H1 (cell line): ENCODE measurements at regions of chr1 and their contacts with region 1.

Region 1: GRCh38 chr1:212838145-212838544 is 9.3 kb downstream of the SPATA45 start:
- DNase-seq: no peak
- H3K4me3 ChIP-seq: no peak overlapping the region
- H3K27ac ChIP-seq: no peak overlapping the region
- H3K4me1 ChIP-seq: no peaks in the 10 kb centered on the region
- H3K27me3 ChIP-seq: no peaks in the 10 kb centered on the region
- CTCF ChIP-seq: no peak
- EP300 ChIP-seq: no peak
- POLR2A ChIP-seq: no peak
- RAD21 ChIP-seq: no peak

Region 2: GRCh38 chr1:212635141-212635631 is 203.0 kb before region 1 on chr1:
- CTCF ChIA-PET with region 1: no interaction called
- POLR2A ChIA-PET with region 1: no interaction called
- DNase-seq: no peak
- H3K4me3 ChIP-seq: no peak overlapping the region
- H3K27ac ChIP-seq: no peak overlapping the region
- H3K4me1 ChIP-seq: peaks cover 0 to 15% (median 7%) of the 10 kb centered on the region in 4 experiments; a peak in 6 of 7 replicates
- H3K27me3 ChIP-seq: no peaks in the 10 kb centered on the region; a peak in 1 of 7 replicates
- CTCF ChIP-seq: no peak
- EP300 ChIP-seq: no peak
- POLR2A ChIP-seq: no peak
- RAD21 ChIP-seq: no peak

Region 3: DNA sequence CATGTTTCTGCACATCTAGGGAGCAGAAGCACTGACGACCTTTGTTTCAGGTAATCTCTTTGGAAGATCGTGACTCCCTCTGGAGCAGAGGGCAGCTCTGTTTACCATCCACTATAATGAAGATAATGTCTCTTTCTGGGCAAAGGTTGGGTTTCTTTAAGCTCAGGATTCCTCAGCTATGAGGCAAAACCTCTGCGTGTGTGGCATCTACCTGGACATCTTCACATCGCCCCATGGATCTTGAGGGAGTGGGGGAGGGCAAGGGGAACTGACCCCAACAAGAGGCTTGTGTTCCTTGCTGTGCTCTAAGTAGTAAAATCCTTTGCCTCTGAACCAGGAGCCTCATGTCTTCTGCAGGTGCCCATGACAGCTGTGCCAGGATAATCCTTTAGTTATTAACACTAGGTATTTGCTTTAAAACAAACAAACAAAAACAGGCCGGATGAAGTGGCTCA is 10.3 kb before region 1 on chr1:
- CTCF ChIA-PET with region 1: interaction called, 12 read pairs
- POLR2A ChIA-PET with region 1: interaction called, 8 read pairs
- DNase-seq: no peak
- H3K4me3 ChIP-seq: no peak overlapping the region
- H3K27ac ChIP-seq: no peak overlapping the region
- H3K4me1 ChIP-seq: peaks cover 0 to 2% (median 0%) of the 10 kb centered on the region in 4 experiments; a peak in 1 of 7 replicates
- H3K27me3 ChIP-seq: no peaks in the 10 kb centered on the region
- CTCF ChIP-seq: no peak
- EP300 ChIP-seq: no peak
- POLR2A ChIP-seq: no peak
- RAD21 ChIP-seq: no peak